ENCODE measurements at regions of chr3 and their contacts with region 1.

Region 1: DNA sequence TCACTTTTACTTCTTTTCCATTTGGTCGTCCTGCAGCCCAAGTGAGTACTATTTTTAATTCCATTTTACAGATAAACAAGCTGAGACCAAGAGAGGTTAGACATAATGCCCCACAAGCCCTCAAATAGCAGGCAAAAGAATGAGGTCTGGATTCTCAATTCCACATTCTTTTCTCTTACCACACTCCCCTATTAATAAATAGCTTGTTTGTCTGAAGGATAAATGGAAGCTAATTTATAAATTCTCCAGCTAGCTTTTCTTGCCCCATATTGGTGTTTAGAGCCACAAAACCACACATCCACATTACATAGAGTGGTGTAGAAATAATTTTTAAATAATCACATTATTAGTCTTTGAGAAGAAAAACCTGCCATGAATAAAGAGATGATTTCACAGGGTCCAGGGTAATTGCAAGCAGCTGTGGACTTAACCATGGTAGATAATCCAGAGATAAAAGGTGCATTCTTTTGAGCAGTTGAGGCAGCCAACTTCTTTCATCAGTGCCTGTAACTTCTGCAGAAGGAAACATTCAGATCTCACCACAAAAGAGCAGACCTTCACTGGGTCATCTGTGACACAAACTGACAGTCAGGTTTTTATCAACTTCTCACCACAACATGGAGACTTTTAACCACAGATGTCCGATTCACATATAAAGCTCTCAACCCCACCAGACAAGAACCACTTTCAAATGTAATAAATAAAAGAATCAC is 313.4 kb upstream of the STT3B start:
- DNase-seq: no peak
- H3K4me3 Mint-ChIP-seq: no peak overlapping the region
- H3K27ac Mint-ChIP-seq: peak overlapping the region; percentile 2
- H3K4me1 Mint-ChIP-seq: peaks cover 92% of the 10 kb centered on the region
- H3K27me3 Mint-ChIP-seq: no peaks in the 10 kb centered on the region

Region 2: GRCh38 chr3:31242026-31242960 is 23.0 kb after region 1 on chr3:
- CTCF ChIA-PET with region 1: no interaction called
- POLR2A ChIA-PET with region 1: no interaction called
- intact Hi-C with region 1: no loop called
- DNase-seq: no peak
- H3K4me3 Mint-ChIP-seq: no peak overlapping the region
- H3K27ac Mint-ChIP-seq: no peak overlapping the region
- H3K4me1 Mint-ChIP-seq: peaks cover 24% of the 10 kb centered on the region
- H3K27me3 Mint-ChIP-seq: no peaks in the 10 kb centered on the region

Region 3: GRCh38 chr3:31356941-31357340 is 137.7 kb after region 1 on chr3:
- CTCF ChIA-PET with region 1: no interaction called
- POLR2A ChIA-PET with region 1: no interaction called
- intact Hi-C with region 1: loop called (anchors 1 kb)
- DNase-seq: peak; percentile 31
- H3K4me3 Mint-ChIP-seq: no peak overlapping the region
- H3K27ac Mint-ChIP-seq: peak overlapping the region; percentile 66
- H3K4me1 Mint-ChIP-seq: peaks cover 38% of the 10 kb centered on the region
- H3K27me3 Mint-ChIP-seq: no peaks in the 10 kb centered on the region

Region 4: GRCh38 chr3:31634481-31634880 is 415.2 kb after region 1 on chr3:
- CTCF ChIA-PET with region 1: no interaction called
- POLR2A ChIA-PET with region 1: no interaction called
- intact Hi-C with region 1: loop called (anchors 10 kb)
- DNase-seq: no peak
- H3K4me3 Mint-ChIP-seq: no peak overlapping the region
- H3K27ac Mint-ChIP-seq: no peak overlapping the region
- H3K4me1 Mint-ChIP-seq: peaks cover 48% of the 10 kb centered on the region
- H3K27me3 Mint-ChIP-seq: no peaks in the 10 kb centered on the region